H1 (cell line): ENCODE measurements at regions of chr2 and their contacts with region 1.

Region 1: DNA sequence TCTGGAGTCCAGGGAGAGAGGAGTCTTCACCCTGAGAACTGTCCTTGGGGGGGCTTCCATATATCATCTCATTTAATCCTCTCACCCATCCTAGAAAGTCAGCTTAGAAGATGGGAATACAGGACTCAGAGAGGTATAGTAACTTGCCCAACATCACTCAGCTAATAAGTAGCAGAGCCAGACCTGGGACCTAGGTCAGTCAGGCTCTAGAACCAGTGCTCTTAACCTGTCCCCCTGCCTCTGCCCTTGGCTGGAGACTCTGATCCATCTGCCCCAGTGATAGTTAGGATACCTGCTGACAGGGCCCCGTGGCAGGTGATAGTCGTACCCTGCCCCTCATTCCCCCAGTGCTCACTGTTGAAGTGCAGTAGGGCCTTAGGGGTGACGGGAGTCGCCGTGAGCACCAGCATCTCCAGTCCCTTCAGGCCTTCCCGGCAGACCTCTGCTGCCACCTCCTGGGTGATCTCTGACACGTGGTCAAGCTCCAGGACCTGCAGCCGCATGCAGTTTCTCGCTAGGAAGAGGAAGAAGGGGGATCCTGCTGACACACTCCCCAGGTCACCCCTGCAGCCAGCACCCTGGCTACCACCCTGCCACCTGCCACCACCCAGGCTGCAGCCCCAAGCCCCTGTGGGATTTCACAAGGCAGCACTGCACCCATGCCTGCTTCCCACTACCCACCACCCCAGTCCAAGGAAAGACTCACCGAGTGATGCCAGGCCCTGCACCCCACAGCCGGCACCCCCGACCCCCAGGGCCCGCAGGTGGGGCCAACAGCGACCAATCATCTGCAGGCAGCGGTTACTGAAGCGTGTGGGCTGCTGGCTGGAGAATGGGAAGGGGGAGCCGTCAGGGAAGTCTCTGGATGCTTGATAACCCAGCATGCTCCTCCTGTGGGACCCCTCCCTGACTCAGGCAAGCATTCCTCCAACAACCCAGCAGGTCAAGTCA is 24.0 kb downstream of the FBXO41 start:
- DNase-seq: peak in 1 of 2 experiments; percentile 80
- H3K4me3 ChIP-seq: no peak overlapping the region
- H3K27ac ChIP-seq: no peak overlapping the region
- H3K4me1 ChIP-seq: peaks cover 0 to 6% (median 3%) of the 10 kb centered on the region in 4 experiments; a peak in 3 of 7 replicates
- H3K27me3 ChIP-seq: no peaks in the 10 kb centered on the region
- CTCF ChIP-seq: peak in 2 of 3 experiments; percentile 67 to 77; a peak in 3 of 4 replicates
- EP300 ChIP-seq: no peak
- POLR2A ChIP-seq: peak in 1 of 2 experiments; percentile 28; a peak in 1 of 3 replicates
- RAD21 ChIP-seq: peak; percentile 71 to 81

Region 2: DNA sequence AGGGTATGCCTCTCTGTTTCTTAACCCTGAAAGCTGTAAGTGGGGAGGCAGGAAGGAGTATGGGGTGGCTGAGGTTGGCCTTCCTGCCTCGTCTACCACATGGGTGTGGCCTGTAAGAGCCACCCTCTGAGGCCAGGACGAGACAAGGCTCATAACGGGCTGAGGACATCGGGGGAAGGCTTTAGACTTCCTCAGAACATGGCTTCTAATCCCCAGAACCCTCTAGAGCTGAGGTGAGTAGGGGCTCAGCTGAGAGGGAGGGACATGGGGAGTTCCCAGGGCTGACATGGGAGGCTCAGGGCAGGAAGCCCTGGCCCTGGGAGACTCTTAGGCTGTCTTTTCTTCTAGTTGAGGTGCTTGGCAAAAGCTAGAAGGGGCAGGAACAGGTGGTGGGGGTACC is 306.3 kb before region 1 on chr2:
- CTCF ChIA-PET with region 1: no interaction called
- POLR2A ChIA-PET with region 1: no interaction called
- DNase-seq: no peak
- H3K4me3 ChIP-seq: no peak overlapping the region
- H3K27ac ChIP-seq: no peak overlapping the region
- H3K4me1 ChIP-seq: peaks cover 3 to 24% (median 17%) of the 10 kb centered on the region in 4 experiments
- H3K27me3 ChIP-seq: no peaks in the 10 kb centered on the region; a peak in 1 of 7 replicates
- CTCF ChIP-seq: no peak
- EP300 ChIP-seq: no peak
- POLR2A ChIP-seq: no peak
- RAD21 ChIP-seq: no peak

Region 3: DNA sequence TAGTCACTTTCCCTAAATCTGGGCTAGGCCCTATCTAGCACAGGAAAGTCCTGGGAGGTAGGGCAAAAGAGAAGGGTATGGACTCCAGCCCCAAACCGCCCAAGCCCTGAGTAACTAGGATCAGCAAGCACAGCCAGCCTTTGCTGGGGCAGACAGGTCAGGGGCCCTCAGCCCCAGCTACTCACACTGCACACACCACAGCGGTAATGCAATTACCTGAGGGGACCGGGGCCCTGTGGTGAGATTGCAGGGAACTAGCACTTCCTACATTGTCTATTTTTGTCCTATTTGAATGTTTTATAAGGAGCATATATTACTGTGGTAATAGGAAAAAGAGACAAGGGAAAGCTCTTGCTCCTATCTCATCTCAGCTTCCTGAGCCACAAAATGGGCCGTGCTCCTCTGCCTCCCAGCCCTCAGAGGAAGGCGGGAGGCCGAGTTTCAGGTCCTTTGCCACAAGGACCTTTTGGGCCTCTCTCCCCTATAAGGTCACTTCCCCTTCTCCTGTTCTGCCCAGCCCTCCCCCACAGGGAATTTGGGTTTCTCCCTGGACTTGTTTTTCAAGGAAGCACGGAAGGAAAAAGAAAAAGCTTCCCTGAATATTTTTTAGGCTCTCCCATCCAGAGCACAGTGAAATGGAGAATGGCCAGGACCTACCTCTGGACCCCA is 168.0 kb before region 1 on chr2:
- CTCF ChIA-PET with region 1: no interaction called
- POLR2A ChIA-PET with region 1: no interaction called
- DNase-seq: no peak
- H3K4me3 ChIP-seq: no peak overlapping the region
- H3K27ac ChIP-seq: no peak overlapping the region
- H3K4me1 ChIP-seq: no peaks in the 10 kb centered on the region; a peak in 1 of 7 replicates
- H3K27me3 ChIP-seq: no peaks in the 10 kb centered on the region
- CTCF ChIP-seq: no peak
- EP300 ChIP-seq: no peak
- POLR2A ChIP-seq: no peak
- RAD21 ChIP-seq: no peak

Region 4: DNA sequence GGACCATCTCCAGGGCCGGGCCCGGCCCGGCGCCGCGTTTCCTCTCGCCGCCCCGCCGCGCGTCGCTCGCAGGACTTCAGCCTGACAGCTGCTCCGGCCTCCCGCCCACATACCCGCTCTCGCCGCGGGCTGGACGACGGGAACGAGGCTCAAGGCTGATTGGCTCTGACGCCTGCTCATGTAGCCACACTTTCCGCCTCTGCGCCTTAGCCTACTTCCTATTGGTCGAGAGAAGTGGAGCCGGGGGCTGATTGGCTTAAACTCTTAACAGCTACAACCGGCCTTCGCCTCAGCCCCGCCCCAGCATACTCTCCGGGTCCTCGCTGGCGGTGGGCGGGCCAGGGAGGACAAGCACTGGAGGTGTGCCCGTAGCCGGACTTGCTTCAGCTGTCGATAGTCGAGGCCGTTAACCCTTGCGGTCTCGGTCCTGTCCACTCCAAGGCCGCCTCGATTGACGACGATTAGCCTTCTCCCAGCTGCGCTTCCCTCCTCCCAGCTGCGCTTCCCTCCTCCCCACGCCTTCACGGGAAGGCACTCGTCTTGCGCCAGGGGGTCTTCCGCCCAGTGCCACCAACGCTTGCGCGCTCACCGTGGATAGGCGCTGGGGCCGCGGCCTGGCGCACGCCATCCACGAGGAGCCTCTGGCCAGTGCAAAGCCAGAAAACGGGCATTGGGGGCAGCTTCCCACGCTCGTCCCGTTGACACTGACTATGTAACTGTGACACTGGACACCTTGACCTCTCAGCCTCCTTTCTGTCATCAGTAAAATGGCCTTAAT is 27.0 kb before region 1 on chr2 and contains the start of gene PRADC1:
- CTCF ChIA-PET with region 1: interaction called, 51 read pairs
- POLR2A ChIA-PET with region 1: interaction called, 105 read pairs
- DNase-seq: peak; percentile 94 to 98
- H3K4me3 ChIP-seq: peak within 1 kb of the TSS; percentile 82 to 93 (median 88)
- H3K27ac ChIP-seq: peak within 1 kb of the TSS; percentile 30; the same call in 1 of the 2 replicates
- H3K4me1 ChIP-seq: peaks cover 10 to 16% (median 13%) of the 10 kb centered on the region in 4 experiments; a peak in 6 of 7 replicates
- H3K27me3 ChIP-seq: no peaks in the 10 kb centered on the region; a peak in 2 of 7 replicates
- CTCF ChIP-seq: no peak
- EP300 ChIP-seq: no peak
- POLR2A ChIP-seq: no peak
- RAD21 ChIP-seq: no peak
- total RNA-seq, gene PRADC1: 7.5 and 8.9 TPM in 2 replicates